ENCODE measurements at regions of chr2 and their contacts with region 1.

Region 1: GRCh38 chr2:96509114-96509846 is 4.1 kb upstream of the NEURL3 start:
- DNase-seq: peak; percentile 97
- ATAC-seq: peak; percentile 86
- H3K4me3 Mint-ChIP-seq: peak overlapping the region; percentile 55
- H3K27ac Mint-ChIP-seq: no peak overlapping the region
- H3K4me1 Mint-ChIP-seq: peaks cover 10% of the 10 kb centered on the region
- H3K27me3 Mint-ChIP-seq: peaks cover 33% of the 10 kb centered on the region
- CTCF ChIP-seq: peak; percentile 93; the same call in 1 of the 2 replicates

Region 2: DNA sequence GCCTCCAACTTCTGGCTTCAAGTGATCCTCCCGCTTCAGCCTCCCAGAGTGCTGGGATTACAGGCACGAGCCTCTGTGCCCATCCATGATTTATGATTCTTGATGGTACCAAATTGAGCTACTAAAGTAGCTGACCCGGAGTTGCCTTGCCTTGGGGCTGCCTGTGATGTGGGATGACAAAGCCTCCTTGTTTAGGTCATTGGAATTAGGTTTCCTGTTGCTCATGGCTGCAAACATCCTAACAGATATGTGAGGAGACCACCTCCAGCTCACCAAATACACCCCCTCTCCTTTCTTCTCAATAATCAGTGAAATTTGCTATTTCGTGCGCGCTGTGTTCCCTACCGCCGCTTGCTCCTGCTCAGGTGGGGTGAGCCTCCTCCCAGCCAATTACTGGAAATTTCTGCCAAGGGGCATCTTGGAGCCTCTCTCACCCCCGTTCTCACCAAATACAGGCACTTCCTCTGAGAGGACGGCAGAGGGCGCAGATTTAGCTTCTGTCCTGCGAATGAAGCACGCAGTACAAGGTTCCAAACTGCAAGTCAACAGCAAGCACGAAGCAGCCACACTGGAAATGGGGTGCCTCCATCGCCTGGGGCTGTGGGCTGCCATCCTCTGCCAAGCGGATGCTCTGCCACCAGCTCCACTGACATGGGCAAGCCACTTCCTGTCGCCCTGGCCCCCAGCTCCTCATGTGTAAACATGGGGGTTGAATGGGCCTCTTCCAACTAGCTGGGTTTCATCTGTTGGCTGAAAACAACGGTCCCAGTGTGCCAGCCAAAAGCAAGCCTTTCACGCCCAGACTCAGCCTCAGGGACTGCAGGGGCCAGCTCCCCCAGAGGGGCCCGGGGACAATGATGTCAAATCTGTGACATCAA is 102.0 kb before region 1 on chr2:
- CTCF ChIA-PET with region 1: interaction called, 127 read pairs
- POLR2A ChIA-PET with region 1: interaction called, 3 read pairs
- DNase-seq: peak; percentile 71
- ATAC-seq: peak; percentile 88
- H3K4me3 Mint-ChIP-seq: no peak overlapping the region
- H3K27ac Mint-ChIP-seq: no peak overlapping the region
- H3K4me1 Mint-ChIP-seq: peaks cover 30% of the 10 kb centered on the region
- H3K27me3 Mint-ChIP-seq: peaks cover 15% of the 10 kb centered on the region
- CTCF ChIP-seq: peak; percentile 82

Region 3: GRCh38 chr2:96470636-96471035 is 38.6 kb before region 1 on chr2:
- CTCF ChIA-PET with region 1: interaction called, 10 read pairs
- POLR2A ChIA-PET with region 1: no interaction called
- DNase-seq: peak; percentile 91
- ATAC-seq: peak; percentile 99
- H3K4me3 Mint-ChIP-seq: peak overlapping the region; percentile 41; the same call in 1 of the 2 replicates
- H3K27ac Mint-ChIP-seq: no peak overlapping the region
- H3K4me1 Mint-ChIP-seq: peaks cover 5% of the 10 kb centered on the region
- H3K27me3 Mint-ChIP-seq: no peaks in the 10 kb centered on the region
- CTCF ChIP-seq: peak; percentile 60

Region 4: DNA sequence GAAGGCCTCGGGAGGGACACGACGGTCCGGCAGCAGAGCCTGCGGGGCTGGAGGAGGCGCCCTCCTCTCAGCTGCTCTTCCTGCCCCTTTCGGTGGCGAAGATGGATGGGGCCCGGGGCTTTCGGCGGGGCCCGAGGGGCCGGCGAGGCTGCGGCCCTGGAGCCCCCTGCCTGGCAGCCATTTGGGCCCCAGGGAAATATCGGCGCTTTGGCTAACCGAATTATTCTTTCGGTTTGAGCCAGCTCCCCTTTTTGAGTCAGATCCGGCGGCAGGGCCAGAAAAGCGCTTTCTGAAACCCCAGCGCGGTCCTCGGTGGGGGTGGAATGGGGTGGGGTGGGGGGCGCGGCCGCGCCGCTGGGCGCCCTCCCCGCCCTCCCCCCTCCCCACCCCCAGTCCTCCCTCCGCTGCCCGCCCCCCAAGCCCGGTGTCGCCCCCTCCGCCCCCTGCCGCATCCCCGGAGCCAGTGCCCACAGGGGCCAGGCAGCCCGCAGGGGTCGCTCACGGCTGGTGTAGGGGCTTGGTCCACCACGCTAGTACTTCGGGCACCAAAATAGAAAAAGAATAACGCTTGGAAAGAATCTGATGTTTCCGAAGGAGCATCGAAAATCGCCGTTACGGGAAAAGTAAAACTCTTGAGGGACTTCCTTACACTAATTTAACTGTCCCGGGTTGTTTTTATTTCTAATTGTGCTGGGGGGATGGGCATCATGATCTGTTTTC is 18.2 kb after region 1 on chr2:
- CTCF ChIA-PET with region 1: interaction called, 36 read pairs
- POLR2A ChIA-PET with region 1: no interaction called
- DNase-seq: peak; percentile 59
- ATAC-seq: peak; percentile 58
- H3K4me3 Mint-ChIP-seq: peak overlapping the region; percentile 61
- H3K27ac Mint-ChIP-seq: no peak overlapping the region
- H3K4me1 Mint-ChIP-seq: peaks cover 26% of the 10 kb centered on the region
- H3K27me3 Mint-ChIP-seq: peaks cover 27% of the 10 kb centered on the region
- CTCF ChIP-seq: no peak

Region 5: GRCh38 chr2:96547751-96548161 is 38.5 kb after region 1 on chr2:
- CTCF ChIA-PET with region 1: interaction called, 11 read pairs
- POLR2A ChIA-PET with region 1: no interaction called
- DNase-seq: no peak
- ATAC-seq: peak; percentile 56
- H3K4me3 Mint-ChIP-seq: peak overlapping the region; percentile 55
- H3K27ac Mint-ChIP-seq: peak overlapping the region; percentile 63
- H3K4me1 Mint-ChIP-seq: peaks cover 21% of the 10 kb centered on the region
- H3K27me3 Mint-ChIP-seq: no peaks in the 10 kb centered on the region; the same call in 1 of the 2 replicates
- CTCF ChIP-seq: no peak

Region 6: GRCh38 chr2:96760986-96761832 is 251.9 kb after region 1 on chr2:
- CTCF ChIA-PET with region 1: no interaction called
- POLR2A ChIA-PET with region 1: no interaction called
- DNase-seq: peak; percentile 33
- ATAC-seq: no peak
- H3K4me3 Mint-ChIP-seq: peak overlapping the region; percentile 67
- H3K27ac Mint-ChIP-seq: peak overlapping the region; percentile 91
- H3K4me1 Mint-ChIP-seq: peaks cover 51% of the 10 kb centered on the region
- H3K27me3 Mint-ChIP-seq: peaks cover 16% of the 10 kb centered on the region
- CTCF ChIP-seq: peak; percentile 34; the same call in 1 of the 2 replicates